HCT116 (cell line): ENCODE measurements at regions of chr11 and their contacts with region 1.

Region 1: GRCh38 chr11:107689317-107690202 is 22.3 kb downstream of the SLN start:
- DNase-seq: peak; percentile 54
- ATAC-seq: peak; percentile 97
- H3K4me3 ChIP-seq: no peak overlapping the region
- H3K27ac ChIP-seq: no peak overlapping the region
- H3K4me1 ChIP-seq: no peaks in the 10 kb centered on the region
- H3K27me3 ChIP-seq: no peaks in the 10 kb centered on the region
- CTCF ChIP-seq: peak; percentile 54 to 93 (median 74)
- POLR2A ChIP-seq: no peak
- RAD21 ChIP-seq: peak; percentile 97

Region 2: GRCh38 chr11:107549253-107549953 is 140.2 kb before region 1 on chr11:
- CTCF ChIA-PET with region 1: interaction called, 29 read pairs
- POLR2A ChIA-PET with region 1: no interaction called
- RAD21 ChIA-PET with region 1: interaction called in 1 of 2 experiments, 3 read pairs
- intact Hi-C with region 1: loop called (anchors 1 kb)
- DNase-seq: no peak
- ATAC-seq: peak; percentile 49; the same call in 1 of the 2 replicates
- H3K4me3 ChIP-seq: no peak overlapping the region
- H3K27ac ChIP-seq: no peak overlapping the region
- H3K4me1 ChIP-seq: peaks cover 12 to 15% of the 10 kb centered on the region in 2 experiments
- H3K27me3 ChIP-seq: no peaks in the 10 kb centered on the region
- CTCF ChIP-seq: peak; percentile 80 to 91 (median 81)
- POLR2A ChIP-seq: no peak
- RAD21 ChIP-seq: peak; percentile 88

Region 3: GRCh38 chr11:107573438-107573837 is 116.1 kb before region 1 on chr11:
- CTCF ChIA-PET with region 1: interaction called, 10 read pairs
- POLR2A ChIA-PET with region 1: no interaction called
- RAD21 ChIA-PET with region 1: no interaction called
- intact Hi-C with region 1: loop called (anchors 1 kb)
- DNase-seq: no peak
- ATAC-seq: no peak
- H3K4me3 ChIP-seq: no peak overlapping the region
- H3K27ac ChIP-seq: no peak overlapping the region
- H3K4me1 ChIP-seq: no peaks in the 10 kb centered on the region
- H3K27me3 ChIP-seq: no peaks in the 10 kb centered on the region
- CTCF ChIP-seq: no peak
- POLR2A ChIP-seq: no peak
- RAD21 ChIP-seq: no peak

Region 4: DNA sequence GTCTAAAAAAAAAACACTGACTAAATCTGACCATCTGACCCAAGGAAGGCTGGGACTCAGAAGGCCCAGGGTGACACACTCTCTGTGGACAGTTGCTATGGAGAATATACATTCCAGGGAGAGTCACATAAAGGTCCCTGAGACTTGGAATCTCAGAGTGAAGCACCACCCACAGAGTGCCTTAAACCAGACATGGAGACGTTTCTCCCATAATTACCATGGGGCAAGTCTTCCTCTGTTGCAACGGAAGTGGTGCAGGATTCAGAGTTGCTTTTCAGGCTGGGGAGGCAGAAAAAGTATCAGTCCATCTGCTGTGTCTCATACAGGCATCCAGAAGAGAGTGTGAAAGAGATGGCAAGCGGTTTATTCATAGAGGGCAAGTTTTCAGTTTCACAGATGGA is 81.0 kb after region 1 on chr11:
- CTCF ChIA-PET with region 1: interaction called, 12 read pairs
- POLR2A ChIA-PET with region 1: no interaction called
- RAD21 ChIA-PET with region 1: no interaction called
- intact Hi-C with region 1: no loop called
- DNase-seq: no peak
- ATAC-seq: peak; percentile 35
- H3K4me3 ChIP-seq: no peak overlapping the region
- H3K27ac ChIP-seq: no peak overlapping the region
- H3K4me1 ChIP-seq: peaks cover 0 to 19% of the 10 kb centered on the region in 2 experiments; a peak in 2 of 4 replicates
- H3K27me3 ChIP-seq: no peaks in the 10 kb centered on the region
- CTCF ChIP-seq: no peak
- POLR2A ChIP-seq: no peak
- RAD21 ChIP-seq: no peak

Region 5: DNA sequence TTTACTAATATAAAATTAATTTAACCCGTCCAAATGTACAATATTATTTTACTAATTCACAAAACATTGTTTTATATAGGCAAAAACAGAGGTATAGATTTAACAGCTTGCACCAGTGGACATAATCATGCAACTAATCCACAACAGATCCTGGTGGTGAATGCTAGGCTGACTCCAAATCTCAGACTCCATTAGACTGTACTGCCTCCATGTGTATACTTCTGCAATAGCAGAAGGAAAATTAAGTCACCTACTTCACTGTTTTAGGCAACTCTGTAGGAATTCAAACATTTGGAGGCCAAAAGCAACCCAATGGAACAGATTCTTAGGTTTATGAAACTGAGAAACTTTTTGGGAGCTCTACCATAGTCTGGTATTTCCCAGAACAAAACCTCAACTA is 208.7 kb after region 1 on chr11:
- CTCF ChIA-PET with region 1: no interaction called
- POLR2A ChIA-PET with region 1: no interaction called
- RAD21 ChIA-PET with region 1: no interaction called
- intact Hi-C with region 1: loop called (anchors 1 kb)
- DNase-seq: peak; percentile 36
- ATAC-seq: peak; percentile 94
- H3K4me3 ChIP-seq: no peak overlapping the region
- H3K27ac ChIP-seq: no peak overlapping the region
- H3K4me1 ChIP-seq: no peaks in the 10 kb centered on the region
- H3K27me3 ChIP-seq: no peaks in the 10 kb centered on the region
- CTCF ChIP-seq: peak; percentile 62 to 77 (median 71); a peak in 5 of 6 replicates
- POLR2A ChIP-seq: no peak
- RAD21 ChIP-seq: peak; percentile 89